Posterior vena cava (tissue), 2 donors: ENCODE measurements at regions of chr17 and their contacts with region 1.

Region 1: DNA sequence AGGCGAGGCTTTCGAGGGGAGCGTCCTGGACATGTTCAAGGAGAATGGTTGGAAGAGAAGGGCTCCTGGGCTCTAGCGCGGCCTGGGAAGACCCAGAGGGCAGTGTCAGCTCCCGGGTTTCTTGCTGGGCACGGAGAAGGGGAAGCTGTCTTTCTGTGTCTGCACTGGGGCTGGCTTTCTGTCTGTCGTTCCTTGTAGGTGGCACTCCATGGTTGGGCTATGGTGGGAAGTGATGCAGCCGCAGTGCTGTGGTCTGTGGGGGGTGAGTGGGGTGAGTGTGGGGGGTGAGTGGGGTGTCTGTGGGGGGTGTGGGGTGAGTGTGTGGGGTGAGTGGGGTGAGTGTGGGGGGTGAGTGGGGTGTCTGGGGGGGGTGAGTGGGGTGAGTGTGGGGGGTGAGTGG is 13.7 kb downstream of the RNF213 start:
- DNase-seq: no peak

Region 2: DNA sequence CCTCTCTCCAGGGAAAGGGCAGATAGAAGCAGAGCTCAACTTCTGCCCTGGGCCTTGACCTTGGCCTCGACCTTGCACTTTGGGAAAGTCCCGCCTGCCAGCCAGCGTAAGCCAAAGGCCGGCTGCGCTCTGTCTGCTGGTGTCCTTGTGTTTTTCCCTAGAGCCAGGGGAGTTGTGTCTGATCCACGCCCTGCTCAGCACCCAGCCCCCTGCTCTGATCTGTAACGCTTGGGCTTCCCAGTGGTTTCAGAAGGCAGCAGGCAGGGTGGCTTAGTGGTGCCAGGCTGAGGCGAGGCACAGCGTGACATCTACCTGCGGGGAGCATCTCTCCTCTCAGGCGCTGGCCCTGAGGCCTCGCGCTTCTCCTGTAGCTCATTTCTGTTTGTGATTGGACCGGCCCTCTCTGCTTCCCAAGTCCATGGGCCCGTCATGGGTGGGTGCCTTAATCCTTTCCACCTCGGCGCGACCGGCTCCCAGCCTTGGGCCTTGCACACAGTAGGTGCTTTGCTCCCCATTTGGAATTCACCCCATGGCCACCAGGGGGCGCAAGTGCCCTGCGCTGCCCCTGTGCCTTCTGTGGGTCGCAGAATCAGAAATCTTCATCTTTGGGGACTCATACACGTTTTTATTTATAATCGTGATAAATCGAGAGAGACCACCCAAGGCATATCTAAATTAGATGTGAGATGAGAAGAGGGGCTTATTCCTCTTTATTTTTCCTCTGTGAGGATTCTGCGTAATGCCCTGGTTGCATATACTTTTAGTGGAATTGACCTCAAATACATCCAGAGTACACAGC is 78.4 kb before region 1 on chr17:
- intact Hi-C with region 1: no loop called
- DNase-seq: no peak

Region 3: GRCh38 chr17:80260069-80260554 is 14.2 kb before region 1 on chr17:
- intact Hi-C with region 1: loop called in 1 of 2 experiments (anchors 2 kb)
- DNase-seq: peak; percentile 93